ENCODE measurements at regions of chr3 and their contacts with region 1.

Region 1: GRCh38 chr3:58217209-58217811 is 6.5 kb upstream of the DNASE1L3 start:
- DNase-seq: peak; percentile 74 to 86 (median 77)
- ATAC-seq: peak; percentile 81 to 98 (median 96)
- H3K4me3 ChIP-seq: peak overlapping the region in 1 of 12 donors; percentile 11
- H3K27ac ChIP-seq: peak overlapping the region in 6 of 12 donors; percentile 8 to 38 (median 30)
- H3K4me1 ChIP-seq: peaks cover 0 to 43% (median 12%) of the 10 kb centered on the region in 12 donors
- H3K27me3 ChIP-seq: no peaks in the 10 kb centered on the region
- CTCF ChIP-seq: peak; percentile 53 to 76 (median 72)
- POLR2A ChIP-seq: no peak

Region 2: GRCh38 chr3:58177747-58178527 is 39.4 kb before region 1 on chr3:
- intact Hi-C with region 1: loop called in 2 of 10 experiments (anchors 5 kb)
- DNase-seq: peak; percentile 89 to 94 (median 91)
- ATAC-seq: peak; percentile 57 to 84 (median 79)
- H3K4me3 ChIP-seq: peak overlapping the region in 10 of 12 donors; percentile 42 to 69 (median 52)
- H3K27ac ChIP-seq: peak overlapping the region in 1 of 12 donors; percentile 1
- H3K4me1 ChIP-seq: peaks cover 0 to 51% (median 30%) of the 10 kb centered on the region in 12 donors
- H3K27me3 ChIP-seq: no peaks in the 10 kb centered on the region
- CTCF ChIP-seq: peak; percentile 90 to 98 (median 93)
- POLR2A ChIP-seq: no peak

Region 3: GRCh38 chr3:58188173-58188564 is 29.1 kb before region 1 on chr3:
- intact Hi-C with region 1: loop called in 6 of 10 experiments (anchors 1 to 5 kb)
- DNase-seq: no peak
- ATAC-seq: no peak
- H3K4me3 ChIP-seq: no peak overlapping the region
- H3K27ac ChIP-seq: peak overlapping the region in 1 of 12 donors; percentile 44
- H3K4me1 ChIP-seq: peaks cover 0 to 20% (median 13%) of the 10 kb centered on the region in 12 donors
- H3K27me3 ChIP-seq: no peaks in the 10 kb centered on the region
- CTCF ChIP-seq: no peak
- POLR2A ChIP-seq: no peak